IMR-90 (cell line): ENCODE measurements at regions of chr10 and their contacts with region 1.

Region 1: DNA sequence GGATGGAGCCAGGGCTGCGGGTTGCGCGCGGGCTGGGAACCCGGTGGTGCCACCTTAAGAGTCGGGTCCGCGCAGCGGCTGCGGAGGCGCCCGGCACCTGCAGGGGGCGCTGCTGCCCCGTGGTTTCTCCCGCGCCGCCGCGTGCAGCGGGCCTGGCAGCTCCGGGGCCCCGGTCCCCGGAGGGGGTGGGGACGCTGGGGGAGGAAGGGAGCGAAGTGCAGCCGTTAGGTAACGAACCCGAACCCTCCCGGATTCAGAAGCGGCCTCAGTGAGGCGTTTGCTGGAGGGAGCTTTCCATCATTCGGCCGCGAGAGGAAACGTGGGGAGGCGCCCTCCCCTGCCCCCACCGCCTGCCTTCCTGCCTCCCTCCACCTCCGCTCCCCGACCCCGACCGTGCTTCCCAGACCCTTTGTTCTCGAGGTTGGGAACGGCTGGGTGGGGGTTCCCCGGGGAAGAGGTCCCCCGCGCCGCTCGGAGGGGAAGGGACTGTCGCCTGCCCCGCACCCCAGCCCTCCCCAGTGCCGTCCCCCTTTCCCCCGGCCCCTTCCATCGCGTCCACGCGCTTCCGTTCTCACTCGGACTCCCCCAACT is 29.6 kb downstream of the SKIDA1 start:
- DNase-seq: peak; percentile 77
- ATAC-seq: peak; percentile 80
- H3K4me3 ChIP-seq: peak overlapping the region; percentile 91
- H3K27ac ChIP-seq: peak overlapping the region; percentile 81
- H3K4me1 ChIP-seq: peaks cover 3% of the 10 kb centered on the region; the same call in 1 of the 2 replicates
- H3K27me3 ChIP-seq: peaks cover 5% of the 10 kb centered on the region
- CTCF ChIP-seq: peak; percentile 98
- POLR2A ChIP-seq: no peak
- RAD21 ChIP-seq: peak; percentile 95

Region 2: DNA sequence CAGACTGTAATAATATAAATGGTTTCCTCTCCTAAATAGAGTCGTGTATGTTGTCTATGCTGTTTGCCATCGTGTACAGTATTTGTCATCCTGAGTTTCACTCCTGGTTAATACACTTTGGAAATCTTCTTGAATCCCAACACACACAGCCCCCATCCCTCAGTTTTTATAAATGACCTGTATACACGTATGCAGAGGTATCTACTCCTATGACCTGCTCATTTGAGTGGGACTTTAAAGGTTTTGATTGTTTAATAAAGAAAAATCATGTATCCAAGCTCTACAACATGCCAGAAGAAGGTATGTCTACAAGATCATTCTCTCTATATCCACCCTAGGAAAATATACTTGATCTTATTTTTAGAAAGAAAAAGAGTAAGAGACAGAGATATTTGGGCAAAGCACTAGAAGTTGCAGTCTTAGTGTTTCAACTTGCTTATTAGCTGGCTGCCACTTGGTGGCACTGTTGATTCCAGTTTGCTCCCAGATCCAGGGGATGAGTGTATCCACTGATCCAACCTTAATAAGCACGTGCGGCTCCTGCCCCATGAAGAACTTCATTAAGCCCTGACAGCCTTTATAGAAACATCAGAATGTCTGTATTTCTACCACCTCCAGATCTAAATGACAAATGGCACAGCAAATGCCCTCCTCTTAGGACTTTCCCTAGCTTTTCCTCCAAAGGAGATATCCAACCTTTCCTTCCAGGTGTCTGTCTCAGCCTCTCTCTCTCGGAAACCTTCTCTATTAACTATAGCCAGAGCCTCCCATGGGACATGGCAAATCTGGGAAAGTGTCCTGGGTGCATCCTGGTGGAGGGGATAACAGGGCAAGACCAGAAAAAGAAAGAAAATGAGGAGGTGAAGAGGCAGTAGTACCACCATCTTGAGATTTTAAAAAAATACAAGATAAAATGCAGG is 417.2 kb before region 1 on chr10:
- CTCF ChIA-PET with region 1: no interaction called
- POLR2A ChIA-PET with region 1: no interaction called
- dilution Hi-C with region 1: no loop called
- in situ Hi-C with region 1: loop called (anchors 25 kb)
- intact Hi-C with region 1: loop called (anchors 2 kb)
- DNase-seq: peak; percentile 61
- ATAC-seq: peak; percentile 98
- H3K4me3 ChIP-seq: no peak overlapping the region
- H3K27ac ChIP-seq: no peak overlapping the region
- H3K4me1 ChIP-seq: no peaks in the 10 kb centered on the region
- H3K27me3 ChIP-seq: 0 out of 2 replicates have a peak, but pooled peaks cover 2% of the 10 kb centered on the region
- CTCF ChIP-seq: peak; percentile 73
- POLR2A ChIP-seq: no peak
- RAD21 ChIP-seq: peak; percentile 84

Region 3: GRCh38 chr10:21525367-21526183 is 29.7 kb after region 1 on chr10 and contains the start of gene SKIDA1:
- CTCF ChIA-PET with region 1: interaction called, 3 read pairs
- POLR2A ChIA-PET with region 1: no interaction called
- dilution Hi-C with region 1: no loop called
- in situ Hi-C with region 1: no loop called
- intact Hi-C with region 1: loop called (anchors 2 kb)
- DNase-seq: peak; percentile 86
- ATAC-seq: peak; percentile 73
- H3K4me3 ChIP-seq: peak within 1 kb of the TSS; percentile 62
- H3K27ac ChIP-seq: peak within 1 kb of the TSS; percentile 98
- H3K4me1 ChIP-seq: peaks cover 3% of the 10 kb centered on the region; the same call in 1 of the 2 replicates
- H3K27me3 ChIP-seq: no peaks in the 10 kb centered on the region
- CTCF ChIP-seq: no peak
- POLR2A ChIP-seq: no peak
- RAD21 ChIP-seq: no peak
- total RNA-seq, gene SKIDA1: 0.56 and 0.72 TPM in 2 replicates

Region 4: GRCh38 chr10:21724695-21725367 is 229.0 kb after region 1 on chr10:
- CTCF ChIA-PET with region 1: interaction called, 4 read pairs
- POLR2A ChIA-PET with region 1: no interaction called
- dilution Hi-C with region 1: no loop called
- in situ Hi-C with region 1: loop called (anchors 5 kb)
- intact Hi-C with region 1: loop called (anchors 2 kb)
- DNase-seq: peak; percentile 100
- ATAC-seq: peak; percentile 88
- H3K4me3 ChIP-seq: no peak overlapping the region
- H3K27ac ChIP-seq: no peak overlapping the region
- H3K4me1 ChIP-seq: peaks cover 6% of the 10 kb centered on the region; the same call in 1 of the 2 replicates
- H3K27me3 ChIP-seq: no peaks in the 10 kb centered on the region
- CTCF ChIP-seq: no peak
- POLR2A ChIP-seq: no peak
- RAD21 ChIP-seq: no peak

Region 5: GRCh38 chr10:21953585-21954057 is 457.8 kb after region 1 on chr10:
- CTCF ChIA-PET with region 1: interaction called, 3 read pairs
- POLR2A ChIA-PET with region 1: no interaction called
- dilution Hi-C with region 1: no loop called
- in situ Hi-C with region 1: loop called (anchors 10 kb)
- intact Hi-C with region 1: loop called (anchors 1 kb)
- DNase-seq: peak; percentile 61
- ATAC-seq: peak; percentile 14; the same call in 1 of the 2 replicates
- H3K4me3 ChIP-seq: no peak overlapping the region
- H3K27ac ChIP-seq: no peak overlapping the region
- H3K4me1 ChIP-seq: no peaks in the 10 kb centered on the region
- H3K27me3 ChIP-seq: no peaks in the 10 kb centered on the region
- CTCF ChIP-seq: peak; percentile 53
- POLR2A ChIP-seq: no peak
- RAD21 ChIP-seq: peak; percentile 60

Region 6: DNA sequence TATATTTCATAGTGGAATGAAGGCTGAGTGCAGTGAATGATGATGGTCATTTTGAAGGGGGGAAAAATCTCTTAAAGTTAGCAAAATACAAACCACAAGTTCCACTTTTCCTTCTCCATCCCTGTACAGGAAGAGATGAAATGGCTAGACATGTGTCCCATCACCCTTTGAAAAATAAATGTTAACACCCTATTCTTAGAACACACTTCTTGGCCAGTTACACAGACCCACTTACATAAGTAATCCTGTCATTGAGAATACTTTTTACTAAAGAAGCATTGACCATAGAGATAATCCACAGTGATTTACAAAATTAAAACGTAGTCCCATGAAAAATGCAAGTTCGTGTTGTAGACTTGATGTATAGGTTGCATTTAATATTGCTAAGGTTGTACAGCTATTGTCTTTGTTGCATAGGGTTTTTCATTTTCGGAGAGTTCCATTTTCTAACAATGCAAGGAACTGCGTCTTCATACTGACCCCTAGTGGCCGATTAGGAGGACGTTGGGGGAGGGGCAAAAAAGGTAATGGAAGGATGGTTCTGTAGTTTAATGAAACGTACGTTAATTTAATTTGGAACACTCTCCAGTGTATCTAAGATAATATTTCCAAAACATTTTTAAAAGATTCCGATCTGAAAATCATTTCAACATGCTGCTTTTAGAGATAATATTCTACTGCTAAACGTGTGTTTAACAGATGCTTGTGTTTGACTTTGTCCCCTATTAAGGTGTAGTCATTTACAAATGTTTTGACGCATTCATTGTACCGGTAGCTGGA is 1492.9 kb after region 1 on chr10:
- CTCF ChIA-PET with region 1: no interaction called
- POLR2A ChIA-PET with region 1: no interaction called
- dilution Hi-C with region 1: no loop called
- in situ Hi-C with region 1: loop called (anchors 25 kb)
- intact Hi-C with region 1: loop called (anchors 2 kb)
- DNase-seq: peak; percentile 47
- ATAC-seq: peak; percentile 79
- H3K4me3 ChIP-seq: no peak overlapping the region
- H3K27ac ChIP-seq: no peak overlapping the region
- H3K4me1 ChIP-seq: no peaks in the 10 kb centered on the region
- H3K27me3 ChIP-seq: peaks cover 22% of the 10 kb centered on the region
- CTCF ChIP-seq: peak; percentile 98
- POLR2A ChIP-seq: no peak
- RAD21 ChIP-seq: peak; percentile 98